Heart left ventricle (tissue), 16 donors: ENCODE measurements at regions of chr9 and their contacts with region 1.

Region 1: DNA sequence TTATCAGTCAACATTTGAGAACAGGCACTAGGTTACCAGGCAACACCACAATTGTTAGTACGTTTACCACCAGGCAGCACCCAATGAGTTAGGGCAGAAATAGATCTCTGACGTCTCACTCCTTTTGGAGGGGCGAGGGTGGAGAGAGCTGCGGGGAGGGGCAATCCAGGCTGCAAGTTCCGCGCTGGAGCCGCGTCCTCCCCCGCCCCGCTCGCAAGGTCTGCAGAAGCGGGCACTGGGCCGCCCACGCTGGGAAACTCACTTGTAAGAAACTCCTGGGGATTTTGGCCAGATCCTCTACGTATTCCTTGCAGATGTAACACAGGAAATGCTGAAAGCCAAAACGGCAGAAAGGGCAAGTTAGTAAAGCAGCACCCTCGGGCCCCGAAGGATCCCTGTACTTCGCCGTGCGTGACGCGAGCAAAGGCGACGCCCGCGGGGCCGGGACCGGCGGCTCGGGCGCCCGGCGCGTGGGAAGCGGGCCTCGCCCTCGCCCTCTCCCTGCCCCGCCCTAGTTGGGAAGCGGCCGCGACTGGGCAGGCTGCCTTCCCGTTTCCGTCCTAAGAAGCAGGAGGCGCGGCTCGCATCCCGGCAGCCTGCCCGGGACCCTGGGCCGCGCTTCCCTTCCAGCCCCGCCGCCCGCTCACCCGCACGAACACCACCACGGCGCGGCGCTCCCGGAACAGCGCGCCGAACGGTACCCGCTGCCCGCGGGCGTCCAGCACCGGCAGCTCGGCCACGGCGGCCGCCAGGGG is 497 bp downstream of the PRXL2C start:
- DNase-seq: peak; percentile 89 to 94 (median 91)
- ATAC-seq: peak; percentile 93 to 95 (median 94)
- H3K4me3 ChIP-seq: peak overlapping the region; percentile 47 to 91 (median 67)
- H3K27ac ChIP-seq: peak overlapping the region; percentile 88 to 99 (median 98)
- H3K4me1 ChIP-seq: peaks cover 0 to 38% (median 13%) of the 10 kb centered on the region in 12 donors
- H3K27me3 ChIP-seq: no peaks in the 10 kb centered on the region
- CTCF ChIP-seq: peak in 4 of 12 donors; percentile 0 to 39 (median 18)
- POLR2A ChIP-seq: peak in 1 of 2 donors; percentile 47

Region 2: GRCh38 chr9:96327694-96328352 is 326.8 kb before region 1 on chr9:
- intact Hi-C with region 1: loop called in 2 of 10 experiments (anchors 5 kb)
- DNase-seq: peak in 1 of 5 donors; percentile 24
- ATAC-seq: peak; percentile 40 to 83 (median 68)
- H3K4me3 ChIP-seq: no peak overlapping the region
- H3K27ac ChIP-seq: no peak overlapping the region
- H3K4me1 ChIP-seq: peaks cover 0 to 5% (median 0%) of the 10 kb centered on the region in 12 donors
- H3K27me3 ChIP-seq: no peaks in the 10 kb centered on the region
- CTCF ChIP-seq: peak; percentile 77 to 89 (median 85)
- POLR2A ChIP-seq: no peak

Region 3: DNA sequence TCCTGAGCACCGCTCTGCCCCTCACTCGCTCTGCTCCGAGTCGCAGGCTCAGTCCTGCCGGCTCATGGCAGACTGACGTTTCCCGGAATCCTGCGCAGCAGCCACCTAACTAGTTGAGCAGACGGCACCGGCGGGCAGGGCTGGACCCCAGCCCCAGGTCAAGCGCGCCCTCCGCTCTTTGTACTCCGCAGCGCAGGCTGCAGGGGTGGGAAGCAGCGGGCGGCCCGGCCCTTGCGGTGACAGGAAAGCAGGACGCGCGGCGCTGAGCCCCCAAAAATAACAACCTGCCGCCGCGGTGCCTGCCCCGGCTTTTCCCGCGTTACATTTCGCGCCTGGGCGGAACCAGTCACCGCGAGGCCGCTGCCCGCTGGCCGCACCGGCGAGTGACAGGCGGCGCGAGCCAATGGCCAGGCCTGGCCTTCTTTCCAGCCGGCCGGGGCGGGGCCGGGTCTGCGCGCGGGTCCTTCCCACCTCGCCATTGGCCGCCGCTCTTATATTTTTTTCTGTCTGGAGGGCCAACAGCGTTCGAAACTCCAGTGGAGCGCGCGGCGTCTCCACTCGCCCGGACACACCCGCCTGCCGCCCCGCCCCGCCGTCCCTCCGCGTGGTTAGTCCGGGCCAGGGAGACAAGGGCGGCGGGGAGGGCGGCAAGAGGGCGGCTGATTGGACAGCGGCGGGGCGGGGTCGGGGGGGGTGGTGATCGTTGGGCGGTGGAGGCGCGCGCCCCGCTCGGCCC is 236.4 kb before region 1 on chr9 and contains the start of gene ZNF367:
- intact Hi-C with region 1: loop called in 3 of 10 experiments (anchors 1 to 5 kb)
- DNase-seq: peak; percentile 98 to 99 (median 99)
- ATAC-seq: peak; percentile 91 to 93 (median 93)
- H3K4me3 ChIP-seq: peak within 1 kb of the TSS; percentile 54 to 97 (median 83)
- H3K27ac ChIP-seq: peak within 1 kb of the TSS; percentile 99 to 100 (median 100)
- H3K4me1 ChIP-seq: peaks cover 6 to 51% (median 29%) of the 10 kb centered on the region in 12 donors
- H3K27me3 ChIP-seq: no peaks in the 10 kb centered on the region
- CTCF ChIP-seq: no peak
- POLR2A ChIP-seq: no peak
- total RNA-seq, gene ZNF367: 2.4 to 5.9 (median 3.2) TPM

Region 4: GRCh38 chr9:96574931-96575351 is 79.7 kb before region 1 on chr9:
- intact Hi-C with region 1: loop called in 1 of 10 experiments (anchors 10 kb)
- DNase-seq: peak in 1 of 5 donors; percentile 55
- ATAC-seq: peak in 2 of 4 donors; percentile 83
- H3K4me3 ChIP-seq: no peak overlapping the region
- H3K27ac ChIP-seq: no peak overlapping the region
- H3K4me1 ChIP-seq: peaks cover 0 to 5% (median 0%) of the 10 kb centered on the region in 12 donors
- H3K27me3 ChIP-seq: no peaks in the 10 kb centered on the region
- CTCF ChIP-seq: no peak
- POLR2A ChIP-seq: no peak

Region 5: GRCh38 chr9:96585426-96585825 is 69.2 kb before region 1 on chr9:
- intact Hi-C with region 1: no loop called
- DNase-seq: no peak
- ATAC-seq: no peak
- H3K4me3 ChIP-seq: no peak overlapping the region
- H3K27ac ChIP-seq: no peak overlapping the region
- H3K4me1 ChIP-seq: peaks cover 0 to 11% (median 0%) of the 10 kb centered on the region in 12 donors
- H3K27me3 ChIP-seq: no peaks in the 10 kb centered on the region
- CTCF ChIP-seq: no peak
- POLR2A ChIP-seq: no peak

Region 6: DNA sequence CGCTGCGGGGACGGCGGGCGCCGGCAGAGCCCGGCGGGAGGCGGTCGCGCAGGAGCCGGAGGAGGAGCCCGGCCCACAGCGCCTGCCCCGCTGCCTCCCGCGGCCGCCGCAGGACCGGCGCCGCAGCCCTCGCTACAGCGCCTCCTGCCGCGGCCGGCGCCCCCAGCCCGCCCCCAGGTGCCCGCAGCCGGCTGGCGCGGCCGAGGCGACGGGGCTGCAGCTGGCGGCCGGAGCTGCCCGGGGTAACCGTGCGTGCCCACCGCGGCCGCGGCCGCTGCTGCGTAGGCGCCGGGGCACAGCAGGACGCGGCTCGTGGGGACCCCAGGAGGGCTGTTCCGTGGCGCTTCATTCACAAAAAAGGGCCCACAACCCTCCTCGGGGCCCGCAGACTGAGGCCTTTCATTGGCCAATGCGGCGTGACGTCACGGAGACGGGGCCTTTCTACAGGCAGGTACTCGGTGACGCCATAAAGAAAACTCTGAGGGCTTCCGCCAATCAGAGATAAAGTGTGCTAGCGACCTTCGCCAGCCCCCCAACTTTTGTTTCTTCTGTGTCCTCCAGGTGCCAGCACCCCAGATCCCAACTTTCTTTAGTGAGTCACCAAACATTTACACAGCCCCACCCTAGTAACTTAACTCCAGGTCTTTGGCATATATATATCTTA is 35.0 kb before region 1 on chr9 and contains the start of gene CDC14B:
- intact Hi-C with region 1: loop called in 3 of 10 experiments (anchors 2 to 5 kb)
- DNase-seq: peak; percentile 87 to 96 (median 92)
- ATAC-seq: peak; percentile 50 to 82 (median 78)
- H3K4me3 ChIP-seq: peak within 1 kb of the TSS; percentile 58 to 89 (median 78)
- H3K27ac ChIP-seq: peak within 1 kb of the TSS; percentile 72 to 92 (median 88)
- H3K4me1 ChIP-seq: peaks cover 0 to 12% (median 2%) of the 10 kb centered on the region in 12 donors
- H3K27me3 ChIP-seq: peaks cover 0 to 14% (median 0%) of the 10 kb centered on the region in 9 donors
- CTCF ChIP-seq: peak in 2 of 12 donors; percentile 21 to 28
- POLR2A ChIP-seq: peak in 1 of 2 donors; percentile 16
- total RNA-seq, gene CDC14B: 18.8 to 37.0 (median 26.9) TPM